PC-9 (cell line): ENCODE measurements at regions of chr6 and their contacts with region 1.

Region 1: DNA sequence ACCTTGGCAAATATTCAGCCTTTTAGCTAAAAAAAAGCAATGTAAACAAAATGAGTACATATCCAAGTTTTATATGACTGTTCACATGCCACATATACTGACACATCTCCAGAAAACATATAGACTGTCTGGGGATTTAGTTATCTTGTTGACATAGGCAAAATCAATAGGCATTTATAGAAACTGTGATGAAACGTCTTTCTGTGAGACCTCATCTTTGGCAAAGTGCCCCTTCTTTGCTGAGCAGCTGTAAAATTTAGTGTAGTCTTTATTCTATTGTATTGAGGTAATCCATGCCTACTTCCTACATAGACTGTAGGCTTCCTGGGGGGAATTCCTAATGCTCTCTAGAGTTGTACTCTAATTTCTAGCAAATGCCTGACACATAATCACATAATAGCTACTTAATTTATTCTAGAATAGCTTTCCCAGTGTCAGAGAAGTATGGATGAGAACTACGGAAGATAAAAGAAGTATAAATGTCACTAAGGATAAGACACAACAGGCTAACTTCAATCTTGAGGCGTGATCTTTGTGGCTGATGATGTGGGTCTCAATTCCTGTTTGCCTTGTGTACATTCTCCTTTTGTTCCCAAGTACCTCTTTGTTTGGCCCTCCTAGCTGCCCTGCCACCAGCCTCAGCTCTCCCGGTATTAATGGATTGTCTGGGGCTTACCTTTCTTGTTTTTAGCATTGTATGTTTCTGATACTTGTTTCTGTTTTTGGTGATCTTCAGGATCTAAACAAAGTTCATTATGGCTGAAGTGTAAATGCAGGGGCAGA is 30.6 kb downstream of the PTCHD4 start:
- DNase-seq: no peak
- H3K4me3 ChIP-seq: no peak overlapping the region
- H3K27ac ChIP-seq: no peak overlapping the region
- H3K4me1 ChIP-seq: peaks cover 4% of the 10 kb centered on the region
- H3K27me3 ChIP-seq: no peaks in the 10 kb centered on the region
- CTCF ChIP-seq: no peak

Region 2: GRCh38 chr6:47323321-47323720 is 757.1 kb before region 1 on chr6:
- CTCF ChIA-PET with region 1: no interaction called
- POLR2A ChIA-PET with region 1: no interaction called
- intact Hi-C with region 1: no loop called
- DNase-seq: no peak
- H3K4me3 ChIP-seq: no peak overlapping the region
- H3K27ac ChIP-seq: no peak overlapping the region
- H3K4me1 ChIP-seq: no peaks in the 10 kb centered on the region
- H3K27me3 ChIP-seq: no peaks in the 10 kb centered on the region
- CTCF ChIP-seq: no peak

Region 3: DNA sequence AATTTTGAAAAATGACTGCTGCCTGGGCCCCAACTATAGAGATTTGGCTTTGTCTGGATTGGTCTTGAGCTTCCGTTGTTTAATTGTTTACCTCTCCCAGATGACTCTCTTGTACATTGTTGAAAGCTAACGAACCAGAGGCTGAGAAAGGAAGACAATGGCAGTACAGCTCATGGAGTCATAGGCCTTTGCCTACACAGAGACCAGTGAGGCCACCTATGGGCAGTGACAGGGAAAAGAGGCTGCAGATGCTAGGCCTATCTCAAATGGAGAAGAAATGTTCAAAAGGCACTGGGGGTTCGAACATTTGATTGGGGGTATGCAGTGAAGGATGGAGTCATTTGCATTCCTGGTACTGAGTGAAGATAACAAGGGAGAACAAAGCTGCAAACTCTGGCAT is 269.5 kb before region 1 on chr6:
- CTCF ChIA-PET with region 1: interaction called, 19 read pairs
- POLR2A ChIA-PET with region 1: no interaction called
- intact Hi-C with region 1: no loop called
- DNase-seq: no peak
- H3K4me3 ChIP-seq: no peak overlapping the region
- H3K27ac ChIP-seq: no peak overlapping the region
- H3K4me1 ChIP-seq: no peaks in the 10 kb centered on the region
- H3K27me3 ChIP-seq: no peaks in the 10 kb centered on the region
- CTCF ChIP-seq: no peak